A549 (cell line): ENCODE measurements at regions of chr17 and their contacts with region 1.

Region 1: GRCh38 chr17:49031965-49032928 is 35.1 kb downstream of the IGF2BP1 start:
- DNase-seq: peak; percentile 87 to 96
- ATAC-seq: peak; percentile 80 to 83
- H3K4me3 ChIP-seq: no peak overlapping the region
- H3K27ac ChIP-seq: peak overlapping the region; percentile 22 to 63; a peak in 5 of 6 replicates
- H3K4me1 ChIP-seq: peaks cover 15% of the 10 kb centered on the region
- CTCF ChIP-seq: peak; percentile 98
- EP300 ChIP-seq: no peak
- POLR2A ChIP-seq: no peak
- RAD21 ChIP-seq: peak; percentile 98 to 99

Region 2: GRCh38 chr17:48543107-48543853 is 489.0 kb before region 1 on chr17:
- CTCF ChIA-PET with region 1: no interaction called
- POLR2A ChIA-PET with region 1: no interaction called
- DNase-seq: peak; percentile 75 to 79
- ATAC-seq: peak; percentile 89 to 92
- H3K4me3 ChIP-seq: peak overlapping the region; percentile 44
- H3K27ac ChIP-seq: peak overlapping the region; percentile 70 to 89
- H3K4me1 ChIP-seq: peaks cover 15% of the 10 kb centered on the region; the same call in 2 of the 3 replicates
- CTCF ChIP-seq: no peak
- EP300 ChIP-seq: no peak
- POLR2A ChIP-seq: peak; percentile 43
- RAD21 ChIP-seq: no peak

Region 3: GRCh38 chr17:48878918-48879898 is 153.0 kb before region 1 on chr17:
- CTCF ChIA-PET with region 1: interaction called, 91 read pairs
- POLR2A ChIA-PET with region 1: interaction called, 3 read pairs
- DNase-seq: peak; percentile 85 to 94
- ATAC-seq: peak; percentile 86 to 88
- H3K4me3 ChIP-seq: no peak overlapping the region
- H3K27ac ChIP-seq: no peak overlapping the region
- H3K4me1 ChIP-seq: peaks cover 15% of the 10 kb centered on the region
- CTCF ChIP-seq: peak; percentile 99
- EP300 ChIP-seq: no peak
- POLR2A ChIP-seq: no peak
- RAD21 ChIP-seq: peak; percentile 99 to 100

Region 4: GRCh38 chr17:48915459-48916282 is 116.6 kb before region 1 on chr17:
- CTCF ChIA-PET with region 1: interaction called, 19 read pairs
- POLR2A ChIA-PET with region 1: no interaction called
- DNase-seq: peak; percentile 62 to 70
- ATAC-seq: peak; percentile 87 to 93
- H3K4me3 ChIP-seq: peak overlapping the region; percentile 13; the same call in 1 of the 3 replicates
- H3K27ac ChIP-seq: peak overlapping the region; percentile 70 to 77
- H3K4me1 ChIP-seq: peaks cover 47% of the 10 kb centered on the region
- CTCF ChIP-seq: no peak
- EP300 ChIP-seq: peak in 1 of 2 experiments; percentile 27; a peak in 1 of 5 replicates
- POLR2A ChIP-seq: no peak
- RAD21 ChIP-seq: no peak

Region 5: DNA sequence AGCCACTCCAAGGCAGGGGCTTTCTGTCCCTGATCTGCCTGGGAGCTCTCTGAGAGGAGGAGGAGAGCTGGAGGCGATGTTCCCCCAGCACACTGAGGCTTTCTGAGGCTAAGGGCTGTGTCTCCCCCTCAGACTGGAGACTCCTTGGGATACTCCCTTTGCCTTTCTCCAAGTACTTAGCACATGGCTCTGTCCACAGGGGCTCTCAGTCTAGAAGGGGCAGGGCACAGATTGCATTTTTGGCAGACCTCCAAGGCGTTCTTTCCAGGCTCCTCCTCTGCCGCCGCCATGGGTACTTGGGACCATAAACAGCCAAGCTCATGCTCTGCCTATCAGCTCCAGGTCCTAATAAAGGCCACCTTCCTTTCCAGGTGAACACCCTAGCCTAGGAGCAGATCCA is 62.0 kb before region 1 on chr17:
- CTCF ChIA-PET with region 1: interaction called, 38 read pairs
- POLR2A ChIA-PET with region 1: no interaction called
- DNase-seq: peak in 1 of 2 experiments; percentile 61
- ATAC-seq: peak; percentile 2; a peak in 2 of 6 replicates
- H3K4me3 ChIP-seq: no peak overlapping the region
- H3K27ac ChIP-seq: peak overlapping the region; percentile 95 to 98
- H3K4me1 ChIP-seq: peaks cover 51% of the 10 kb centered on the region
- CTCF ChIP-seq: no peak
- EP300 ChIP-seq: no peak
- POLR2A ChIP-seq: no peak
- RAD21 ChIP-seq: no peak

Region 6: GRCh38 chr17:49076573-49077384 is 44.5 kb after region 1 on chr17:
- CTCF ChIA-PET with region 1: interaction called, 11 read pairs
- POLR2A ChIA-PET with region 1: no interaction called
- DNase-seq: peak in 1 of 2 experiments; percentile 44
- ATAC-seq: peak; percentile 60 to 76; a peak in 4 of 6 replicates
- H3K4me3 ChIP-seq: no peak overlapping the region
- H3K27ac ChIP-seq: peak overlapping the region in 1 of 2 experiments; percentile 43; a peak in 3 of 6 replicates
- H3K4me1 ChIP-seq: peaks cover 13% of the 10 kb centered on the region
- CTCF ChIP-seq: no peak
- EP300 ChIP-seq: no peak
- POLR2A ChIP-seq: no peak
- RAD21 ChIP-seq: no peak